Activated CD8-positive, alpha-beta memory T cell treated with anti-CD3 and anti-CD28 coated beads, Interleukin-2, amount 10 ng/mL, durations not matched to agents 7 days and 5 days (primary cell): ENCODE measurements at regions of chr4 and their contacts with region 1.

Region 1: DNA sequence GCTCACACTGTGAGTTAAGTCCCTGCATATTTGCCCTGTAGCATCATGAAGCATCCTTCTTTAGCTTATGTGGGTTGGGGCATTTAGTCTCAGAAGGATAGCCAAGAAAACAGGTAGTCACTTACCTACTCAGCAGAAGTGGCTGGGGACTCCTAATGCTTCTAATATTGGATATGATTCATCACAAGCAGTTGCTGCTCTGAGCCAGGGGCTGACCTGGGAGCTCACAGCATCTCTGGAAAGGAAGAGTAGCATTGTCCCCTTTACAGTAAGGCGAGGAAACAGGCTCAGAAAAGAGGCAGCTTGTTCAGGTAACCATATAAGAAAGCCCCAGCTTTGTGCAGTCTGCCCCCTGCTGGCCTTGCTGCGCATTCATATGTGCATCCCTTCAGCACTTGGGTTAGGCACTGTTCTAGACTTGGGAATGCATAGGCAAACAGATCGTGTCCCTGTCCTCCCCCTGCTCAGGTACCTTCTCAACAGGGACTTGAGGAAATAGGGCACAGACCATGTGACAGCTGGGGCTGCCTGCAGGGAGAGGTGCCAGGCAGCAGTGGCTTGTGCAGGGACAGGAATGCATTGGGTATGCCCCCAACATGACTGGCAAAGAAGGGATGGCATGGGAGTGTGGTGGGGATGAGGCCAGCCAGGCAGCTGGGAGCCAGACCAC is 35.7 kb upstream of the TBC1D14 start:
- DNase-seq: peak; percentile 88
- ATAC-seq: peak; percentile 97
- H3K4me3 Mint-ChIP-seq: no peak overlapping the region
- H3K27ac Mint-ChIP-seq: no peak overlapping the region
- H3K4me1 Mint-ChIP-seq: peaks cover 9% of the 10 kb centered on the region
- H3K27me3 Mint-ChIP-seq: no peaks in the 10 kb centered on the region

Region 2: GRCh38 chr4:6633041-6633906 is 240.7 kb before region 1 on chr4:
- CTCF ChIA-PET with region 1: no interaction called
- DNase-seq: no peak
- ATAC-seq: no peak
- H3K4me3 Mint-ChIP-seq: no peak overlapping the region
- H3K27ac Mint-ChIP-seq: no peak overlapping the region
- H3K4me1 Mint-ChIP-seq: peaks cover 3% of the 10 kb centered on the region
- H3K27me3 Mint-ChIP-seq: no peaks in the 10 kb centered on the region

Region 3: GRCh38 chr4:6716018-6716911 is 157.7 kb before region 1 on chr4 and contains the start of gene BLOC1S4:
- CTCF ChIA-PET with region 1: interaction called, 174 read pairs
- DNase-seq: peak; percentile 92
- ATAC-seq: peak; percentile 90
- H3K4me3 Mint-ChIP-seq: peak within 1 kb of the TSS; percentile 88
- H3K27ac Mint-ChIP-seq: peak within 1 kb of the TSS; percentile 93
- H3K4me1 Mint-ChIP-seq: peaks cover 32% of the 10 kb centered on the region
- H3K27me3 Mint-ChIP-seq: no peaks in the 10 kb centered on the region
- total RNA-seq, gene BLOC1S4: 21.8 to 22.3 TPM

Region 4: DNA sequence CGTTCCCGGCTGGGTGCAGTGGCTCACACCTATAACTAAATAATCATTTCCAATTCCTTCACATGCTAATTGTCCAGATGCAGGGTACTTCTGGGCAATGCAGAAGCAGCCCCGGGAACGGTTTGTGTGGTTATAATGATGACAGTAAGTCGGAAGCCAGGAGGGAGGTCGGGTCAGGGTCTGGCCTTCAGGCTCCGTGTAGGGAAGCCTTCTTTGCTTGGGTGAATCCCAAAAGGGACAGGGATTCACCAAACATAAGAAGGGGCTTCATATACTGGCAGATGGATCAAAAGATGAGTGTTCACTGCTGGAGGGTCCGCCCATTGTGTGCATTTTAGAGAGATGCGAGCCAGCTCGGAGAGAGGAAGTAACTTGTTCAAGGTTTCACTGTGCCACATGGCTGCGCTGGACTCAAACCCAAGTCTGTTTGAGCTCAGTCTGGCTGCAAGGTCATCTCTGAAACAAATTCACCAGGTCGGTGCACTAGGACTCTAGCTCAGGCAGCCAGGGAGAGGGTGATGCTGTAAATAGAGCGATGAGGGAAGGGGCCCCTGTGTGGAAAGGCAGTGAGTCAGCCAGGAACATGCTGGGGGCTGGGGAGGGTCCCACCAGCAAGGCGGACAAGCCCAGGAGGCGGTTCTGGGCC is 96.2 kb before region 1 on chr4:
- CTCF ChIA-PET with region 1: interaction called, 31 read pairs
- DNase-seq: peak; percentile 59
- ATAC-seq: no peak
- H3K4me3 Mint-ChIP-seq: peak overlapping the region; percentile 23
- H3K27ac Mint-ChIP-seq: peak overlapping the region; percentile 85
- H3K4me1 Mint-ChIP-seq: peaks cover 39% of the 10 kb centered on the region
- H3K27me3 Mint-ChIP-seq: no peaks in the 10 kb centered on the region

Region 5: GRCh38 chr4:6825403-6825802 is 48.5 kb before region 1 on chr4:
- CTCF ChIA-PET with region 1: interaction called, 10 read pairs
- DNase-seq: peak; percentile 48
- ATAC-seq: peak; percentile 91
- H3K4me3 Mint-ChIP-seq: peak overlapping the region; percentile 11
- H3K27ac Mint-ChIP-seq: peak overlapping the region; percentile 83
- H3K4me1 Mint-ChIP-seq: peaks cover 38% of the 10 kb centered on the region
- H3K27me3 Mint-ChIP-seq: no peaks in the 10 kb centered on the region

Region 6: DNA sequence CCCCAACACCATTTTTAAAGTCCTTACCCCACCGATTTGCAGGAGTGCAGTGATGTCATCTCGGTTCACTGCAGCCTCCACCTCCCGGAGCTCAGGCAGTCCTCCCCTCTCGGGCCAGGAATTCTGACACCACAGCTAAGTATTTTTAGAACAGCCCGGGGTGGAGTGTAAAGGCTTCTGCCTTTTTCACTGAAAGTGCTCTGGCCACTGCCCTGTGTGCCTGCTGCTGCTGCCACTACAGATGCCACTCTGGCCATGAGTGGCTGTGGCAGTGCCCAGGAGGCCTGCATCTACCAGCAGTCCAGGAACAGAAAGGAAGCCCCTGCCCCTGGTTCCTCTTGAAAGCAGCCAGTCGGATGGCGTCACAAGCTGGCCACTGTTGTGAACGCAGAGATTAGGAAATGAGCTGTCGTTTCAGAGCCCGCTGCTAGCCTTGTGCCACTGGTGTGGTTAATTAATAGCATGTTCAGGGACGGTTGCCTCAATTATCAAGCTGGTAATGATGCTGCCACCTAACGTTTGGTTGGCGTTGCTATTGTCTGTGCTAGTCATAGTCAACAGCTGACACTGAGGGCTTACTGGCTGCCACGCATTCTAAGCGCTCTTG is 12.1 kb after region 1 on chr4:
- CTCF ChIA-PET with region 1: interaction called, 47 read pairs
- DNase-seq: no peak
- ATAC-seq: peak; percentile 61
- H3K4me3 Mint-ChIP-seq: no peak overlapping the region
- H3K27ac Mint-ChIP-seq: peak overlapping the region; percentile 45
- H3K4me1 Mint-ChIP-seq: peaks cover 7% of the 10 kb centered on the region
- H3K27me3 Mint-ChIP-seq: no peaks in the 10 kb centered on the region

Region 7: GRCh38 chr4:6937754-6938153 is 63.8 kb after region 1 on chr4:
- CTCF ChIA-PET with region 1: no interaction called
- DNase-seq: no peak
- ATAC-seq: no peak
- H3K4me3 Mint-ChIP-seq: no peak overlapping the region
- H3K27ac Mint-ChIP-seq: no peak overlapping the region
- H3K4me1 Mint-ChIP-seq: peaks cover 60% of the 10 kb centered on the region
- H3K27me3 Mint-ChIP-seq: no peaks in the 10 kb centered on the region

Region 8: GRCh38 chr4:7007944-7008343 is 134.0 kb after region 1 on chr4:
- CTCF ChIA-PET with region 1: no interaction called
- DNase-seq: no peak
- ATAC-seq: no peak
- H3K4me3 Mint-ChIP-seq: no peak overlapping the region
- H3K27ac Mint-ChIP-seq: no peak overlapping the region
- H3K4me1 Mint-ChIP-seq: peaks cover 10% of the 10 kb centered on the region
- H3K27me3 Mint-ChIP-seq: no peaks in the 10 kb centered on the region

Region 9: GRCh38 chr4:7042697-7043464 is 169.0 kb after region 1 on chr4 and contains the start of gene TADA2B:
- CTCF ChIA-PET with region 1: interaction called, 12 read pairs
- DNase-seq: peak; percentile 95
- ATAC-seq: peak; percentile 91
- H3K4me3 Mint-ChIP-seq: peak within 1 kb of the TSS; percentile 84
- H3K27ac Mint-ChIP-seq: peak within 1 kb of the TSS; percentile 72
- H3K4me1 Mint-ChIP-seq: peaks cover 40% of the 10 kb centered on the region
- H3K27me3 Mint-ChIP-seq: peaks cover 11% of the 10 kb centered on the region
- total RNA-seq, gene TADA2B: 16.9 to 21.4 TPM